ENCODE measurements at regions of chr12 and their contacts with region 1.

Region 1: DNA sequence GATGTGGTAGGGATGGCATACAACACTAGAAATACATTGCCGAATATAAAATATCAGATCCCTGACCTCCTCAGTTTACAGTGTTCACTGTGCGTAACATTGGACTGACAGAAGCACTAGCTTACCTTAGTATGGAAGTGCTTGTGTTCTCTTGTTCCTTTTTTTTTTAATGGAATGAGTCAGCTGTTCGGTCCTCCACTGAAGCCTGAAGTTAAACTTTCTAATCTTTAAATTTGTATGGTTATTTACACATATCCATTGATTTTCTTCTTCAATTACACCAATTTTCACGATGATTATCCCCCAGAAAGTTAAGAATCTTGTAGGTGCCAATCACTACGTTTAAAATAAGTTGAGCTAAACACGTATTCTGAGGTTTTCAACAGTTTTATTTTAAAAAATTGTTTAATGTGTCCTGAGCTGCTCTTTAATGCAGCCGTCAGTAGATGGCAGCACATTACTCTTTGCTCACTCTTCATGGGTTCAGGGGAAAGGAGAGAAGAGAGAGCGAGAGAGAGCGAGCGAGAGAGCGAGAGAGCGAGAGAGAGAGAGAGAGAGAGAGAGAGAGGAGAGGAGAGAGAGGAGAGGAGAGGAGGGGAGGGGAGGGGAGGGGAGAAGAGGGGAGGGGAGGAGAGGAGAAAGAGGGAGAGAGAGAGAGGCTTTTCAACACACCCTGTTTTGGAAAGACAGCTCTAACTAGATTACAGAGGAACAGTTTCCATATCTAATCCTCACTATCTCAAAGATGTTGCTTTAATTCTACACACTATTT is 134.7 kb upstream of the SCAF11 start:
- DNase-seq: peak; percentile 73
- ATAC-seq: peak; percentile 98
- H3K4me3 Mint-ChIP-seq: peak overlapping the region; percentile 2
- H3K27ac Mint-ChIP-seq: no peak overlapping the region
- H3K4me1 Mint-ChIP-seq: peaks cover 5% of the 10 kb centered on the region
- H3K27me3 Mint-ChIP-seq: peaks cover 6% of the 10 kb centered on the region
- CTCF ChIP-seq: peak; percentile 60

Region 2: DNA sequence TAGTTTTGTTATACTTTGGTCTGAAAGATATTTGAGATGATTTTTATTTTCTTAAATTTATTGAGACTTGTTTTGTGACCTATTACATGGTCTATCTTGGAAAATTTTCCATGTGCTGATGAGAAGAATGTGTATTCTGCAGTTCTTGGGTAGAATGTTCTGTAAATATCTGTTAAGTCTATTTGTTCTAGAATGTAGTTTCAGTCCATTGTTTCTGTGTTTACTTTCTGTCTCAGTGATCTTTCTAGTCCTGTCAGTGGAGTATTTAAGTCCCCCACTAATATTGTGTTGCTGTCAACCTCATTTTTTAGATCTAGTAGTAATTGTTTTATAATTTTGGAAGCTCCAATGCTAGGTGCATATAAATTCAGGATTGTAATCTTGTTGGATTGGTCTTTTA is 104.3 kb before region 1 on chr12:
- CTCF ChIA-PET with region 1: no interaction called
- POLR2A ChIA-PET with region 1: no interaction called
- intact Hi-C with region 1: no loop called
- DNase-seq: no peak
- ATAC-seq: no peak
- H3K4me3 Mint-ChIP-seq: no peak overlapping the region
- H3K27ac Mint-ChIP-seq: no peak overlapping the region
- H3K4me1 Mint-ChIP-seq: no peaks in the 10 kb centered on the region
- H3K27me3 Mint-ChIP-seq: peaks cover 6% of the 10 kb centered on the region
- CTCF ChIP-seq: no peak

Region 3: DNA sequence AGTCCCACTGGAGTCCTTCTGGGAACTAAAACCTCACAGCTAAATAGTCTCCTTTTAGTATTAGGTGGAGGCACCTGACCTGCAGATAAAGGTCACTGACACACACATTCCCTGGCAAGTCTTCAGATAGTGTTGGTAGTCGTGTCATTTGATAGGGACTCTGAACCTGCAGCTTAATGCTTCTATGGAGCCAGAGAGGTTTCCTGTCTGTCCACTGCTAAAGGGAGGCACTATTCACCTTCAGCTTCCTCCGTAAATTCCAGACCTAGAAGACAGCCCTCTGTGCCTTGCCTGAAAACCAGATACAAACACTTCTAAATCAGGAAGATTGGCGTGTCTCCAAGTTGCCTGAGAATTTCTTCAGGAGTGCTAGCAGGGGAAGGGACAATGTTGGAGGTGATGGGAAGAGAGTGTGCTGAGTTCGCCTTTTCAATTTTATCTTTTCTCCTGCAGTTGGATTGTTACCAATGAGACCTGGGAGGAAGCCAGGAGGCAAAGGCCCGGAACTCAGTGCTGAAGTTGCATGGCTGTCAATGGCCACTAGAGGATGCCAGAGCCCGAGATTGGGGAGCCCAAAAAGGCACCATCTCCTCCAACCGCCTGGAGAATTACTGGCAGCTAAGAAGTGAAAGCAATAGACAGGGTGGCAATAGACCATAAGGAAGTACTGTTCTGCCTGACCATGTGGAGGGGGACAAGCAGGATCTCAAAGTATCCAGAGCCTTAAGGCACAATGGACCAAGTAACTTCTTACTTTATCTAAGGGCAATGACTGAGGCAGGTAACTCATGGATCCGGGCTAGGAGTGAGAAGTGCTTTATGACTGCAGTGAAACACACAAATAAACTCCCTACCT is 53.0 kb before region 1 on chr12:
- CTCF ChIA-PET with region 1: interaction called, 36 read pairs
- POLR2A ChIA-PET with region 1: no interaction called
- intact Hi-C with region 1: no loop called
- DNase-seq: peak; percentile 73
- ATAC-seq: peak; percentile 96
- H3K4me3 Mint-ChIP-seq: no peak overlapping the region
- H3K27ac Mint-ChIP-seq: no peak overlapping the region
- H3K4me1 Mint-ChIP-seq: no peaks in the 10 kb centered on the region
- H3K27me3 Mint-ChIP-seq: peaks cover 1% of the 10 kb centered on the region
- CTCF ChIP-seq: peak; percentile 92

Region 4: GRCh38 chr12:46108721-46109120 is 16.3 kb before region 1 on chr12:
- CTCF ChIA-PET with region 1: interaction called, 19 read pairs
- POLR2A ChIA-PET with region 1: no interaction called
- intact Hi-C with region 1: no loop called
- DNase-seq: no peak
- ATAC-seq: no peak
- H3K4me3 Mint-ChIP-seq: no peak overlapping the region
- H3K27ac Mint-ChIP-seq: no peak overlapping the region
- H3K4me1 Mint-ChIP-seq: no peaks in the 10 kb centered on the region
- H3K27me3 Mint-ChIP-seq: peaks cover 5% of the 10 kb centered on the region
- CTCF ChIP-seq: no peak

Region 5: DNA sequence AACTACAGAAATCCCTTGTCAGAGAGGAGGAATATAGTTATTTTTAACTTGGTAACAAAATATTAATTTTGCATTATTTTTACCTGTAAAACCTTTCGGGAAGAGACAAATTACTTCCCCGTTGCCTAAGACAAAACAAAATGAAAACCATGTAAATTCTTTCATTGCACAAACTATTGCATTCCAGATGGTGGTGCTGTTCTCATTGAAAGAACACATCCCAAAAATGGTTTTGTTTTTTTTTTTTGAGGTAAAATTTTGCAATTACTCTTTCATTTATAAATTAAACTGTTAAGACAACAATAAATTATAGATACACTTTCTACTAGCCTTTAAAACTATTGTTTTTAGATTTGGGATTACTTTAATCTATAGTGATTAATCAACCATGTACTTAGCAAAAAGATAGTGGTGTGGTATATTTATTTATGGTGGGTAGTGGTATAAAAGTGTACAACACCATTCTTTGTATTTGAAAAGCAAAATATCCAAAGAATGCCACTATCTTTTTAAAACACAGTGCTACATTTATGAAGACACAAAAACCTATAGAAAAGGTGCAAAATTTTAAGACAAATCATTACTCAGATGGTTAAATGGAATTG is 28.3 kb after region 1 on chr12:
- CTCF ChIA-PET with region 1: interaction called, 17 read pairs
- POLR2A ChIA-PET with region 1: no interaction called
- intact Hi-C with region 1: no loop called
- DNase-seq: no peak
- ATAC-seq: peak; percentile 39
- H3K4me3 Mint-ChIP-seq: no peak overlapping the region
- H3K27ac Mint-ChIP-seq: no peak overlapping the region
- H3K4me1 Mint-ChIP-seq: peaks cover 15% of the 10 kb centered on the region
- H3K27me3 Mint-ChIP-seq: peaks cover 1% of the 10 kb centered on the region
- CTCF ChIP-seq: peak; percentile 85

Region 6: DNA sequence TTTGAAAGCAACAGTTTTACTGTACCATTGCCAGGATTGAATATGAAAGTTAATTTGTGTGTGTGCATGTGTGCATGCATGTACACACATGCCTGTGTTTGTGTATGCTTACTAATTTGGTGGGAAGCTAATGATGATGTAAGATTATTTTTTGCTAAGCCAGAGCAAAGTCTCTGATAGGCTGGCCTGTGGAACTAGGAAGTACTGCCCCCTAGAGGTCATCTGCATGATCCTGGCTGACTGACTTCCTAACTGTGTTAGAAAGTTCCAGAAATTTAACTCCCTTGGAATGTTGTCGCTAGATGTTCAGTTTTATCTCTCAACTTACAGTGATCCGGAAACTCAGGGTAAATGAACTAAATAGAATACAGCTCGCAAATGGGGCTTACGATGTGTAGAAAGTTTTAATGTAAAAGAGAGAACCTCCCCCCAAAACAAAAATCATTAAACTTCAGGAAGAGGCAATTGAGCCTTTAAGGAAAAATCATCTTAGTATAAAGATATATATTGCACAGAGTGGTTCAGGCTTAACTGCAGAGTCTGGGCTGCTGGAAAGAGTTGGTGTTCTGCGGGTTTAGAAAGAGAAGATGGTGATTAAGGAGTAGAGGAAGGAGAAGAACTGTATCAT is 178.1 kb after region 1 on chr12:
- CTCF ChIA-PET with region 1: interaction called, 41 read pairs
- POLR2A ChIA-PET with region 1: no interaction called
- intact Hi-C with region 1: loop called (anchors 5 kb)
- DNase-seq: peak; percentile 59
- ATAC-seq: peak; percentile 74
- H3K4me3 Mint-ChIP-seq: no peak overlapping the region
- H3K27ac Mint-ChIP-seq: no peak overlapping the region
- H3K4me1 Mint-ChIP-seq: peaks cover 7% of the 10 kb centered on the region
- H3K27me3 Mint-ChIP-seq: no peaks in the 10 kb centered on the region
- CTCF ChIP-seq: peak; percentile 95

Region 7: DNA sequence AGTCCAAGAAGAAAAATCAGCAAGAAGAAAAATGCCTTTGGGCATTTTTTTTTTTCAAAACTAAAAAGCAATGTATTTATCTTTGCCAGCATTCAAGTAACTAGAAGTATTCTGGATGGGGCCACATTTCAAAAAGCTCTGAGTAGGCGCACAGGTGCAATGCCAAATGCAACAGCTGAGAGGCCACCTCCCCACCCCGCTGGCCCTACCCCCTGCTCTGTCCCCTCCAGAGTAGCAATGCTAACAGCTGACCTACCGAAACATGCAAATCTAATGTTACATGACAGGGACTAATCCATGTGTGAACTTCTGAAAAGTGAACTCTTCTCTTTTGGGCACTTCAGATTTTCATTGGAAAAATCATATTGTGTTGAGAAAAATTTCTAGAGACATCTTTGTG is 401.2 kb after region 1 on chr12:
- CTCF ChIA-PET with region 1: no interaction called
- POLR2A ChIA-PET with region 1: no interaction called
- intact Hi-C with region 1: no loop called
- DNase-seq: no peak
- ATAC-seq: no peak
- H3K4me3 Mint-ChIP-seq: no peak overlapping the region
- H3K27ac Mint-ChIP-seq: no peak overlapping the region
- H3K4me1 Mint-ChIP-seq: peaks cover 30% of the 10 kb centered on the region
- H3K27me3 Mint-ChIP-seq: no peaks in the 10 kb centered on the region
- CTCF ChIP-seq: no peak

Region 8: DNA sequence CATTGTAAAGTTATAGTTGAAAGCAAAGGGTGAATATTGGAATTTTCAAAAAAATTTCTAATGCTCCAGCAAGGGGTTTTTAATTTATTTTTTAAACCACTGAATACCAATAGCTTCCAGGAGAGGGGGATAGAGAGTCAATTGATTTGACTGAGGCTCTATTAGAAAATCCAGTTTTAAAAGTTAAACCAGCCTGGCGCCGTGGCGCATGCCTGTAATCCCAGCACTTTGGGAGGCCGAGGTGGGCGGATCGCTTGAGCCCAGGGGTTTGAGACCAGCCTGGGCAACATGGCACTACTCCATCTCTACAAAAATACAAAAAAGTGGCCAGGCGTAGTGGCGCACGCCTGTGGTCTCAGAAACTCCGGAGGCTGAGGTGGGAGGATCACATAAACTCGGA is 550.7 kb after region 1 on chr12:
- CTCF ChIA-PET with region 1: interaction called, 12 read pairs
- POLR2A ChIA-PET with region 1: interaction called, 3 read pairs
- intact Hi-C with region 1: no loop called
- DNase-seq: no peak
- ATAC-seq: no peak
- H3K4me3 Mint-ChIP-seq: no peak overlapping the region
- H3K27ac Mint-ChIP-seq: no peak overlapping the region
- H3K4me1 Mint-ChIP-seq: peaks cover 2% of the 10 kb centered on the region
- H3K27me3 Mint-ChIP-seq: no peaks in the 10 kb centered on the region
- CTCF ChIP-seq: peak; percentile 80

Region 9: GRCh38 chr12:47021298-47021697 is 896.3 kb after region 1 on chr12:
- CTCF ChIA-PET with region 1: interaction called, 18 read pairs
- POLR2A ChIA-PET with region 1: no interaction called
- intact Hi-C with region 1: no loop called
- DNase-seq: peak; percentile 16
- ATAC-seq: peak; percentile 70
- H3K4me3 Mint-ChIP-seq: no peak overlapping the region
- H3K27ac Mint-ChIP-seq: no peak overlapping the region
- H3K4me1 Mint-ChIP-seq: peaks cover 4% of the 10 kb centered on the region
- H3K27me3 Mint-ChIP-seq: peaks cover 10% of the 10 kb centered on the region
- CTCF ChIP-seq: peak; percentile 81